ENCODE measurements at regions of chr11 and their contacts with region 1.

Region 1: GRCh38 chr11:35373284-35373933 is 45.9 kb downstream of the SLC1A2 start:
- DNase-seq: no peak
- CTCF ChIP-seq: no peak

Region 2: GRCh38 chr11:35344681-35345574 is 28.5 kb before region 1 on chr11:
- CTCF ChIA-PET with region 1: interaction called, 11 read pairs
- POLR2A ChIA-PET with region 1: no interaction called
- DNase-seq: peak; percentile 22
- CTCF ChIP-seq: no peak

Measured in GM10248 (cell line).